Caco-2 (cell line): ENCODE measurements at regions of chr2 and their contacts with region 1.

Region 1: DNA sequence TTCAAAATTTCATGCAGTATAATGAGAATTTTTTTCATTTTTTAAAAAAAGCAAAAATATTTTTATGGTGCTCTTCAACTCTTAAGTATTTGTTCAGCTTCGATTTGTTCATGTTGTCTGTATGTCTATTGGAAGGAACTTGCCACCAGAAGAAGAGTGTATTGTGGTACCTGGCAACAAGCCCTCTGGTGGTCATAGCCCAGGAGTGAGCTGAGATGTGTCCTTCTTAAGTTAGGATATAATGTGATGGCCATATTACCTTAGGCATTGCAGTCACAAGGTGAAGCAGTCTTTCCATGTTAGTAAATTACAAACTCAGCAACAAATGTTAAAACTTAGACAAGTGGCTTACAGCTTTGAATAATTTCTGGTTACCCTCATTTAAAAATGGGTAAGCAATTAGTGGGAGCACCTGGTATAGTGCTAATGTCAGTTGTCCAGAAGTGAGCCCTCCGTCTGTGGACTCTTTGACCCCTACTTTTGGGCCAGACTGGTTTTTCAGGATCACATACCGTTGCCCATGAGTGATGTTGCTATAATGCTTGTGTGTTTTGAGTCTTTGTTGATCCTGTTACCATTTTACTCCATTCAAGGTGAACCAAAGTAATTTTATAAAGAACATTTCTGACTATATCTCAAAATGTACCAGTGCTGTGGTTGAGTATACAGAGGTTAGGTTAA is 57.4 kb downstream of the MYO1B start:
- DNase-seq: peak; percentile 56 to 59
- H3K4me3 ChIP-seq: no peak overlapping the region
- H3K4me3 Mint-ChIP-seq: no peak overlapping the region
- H3K27ac Mint-ChIP-seq: peak overlapping the region; percentile 18
- H3K4me1 ChIP-seq: peaks cover 26% of the 10 kb centered on the region
- H3K4me1 Mint-ChIP-seq: peaks cover 37% of the 10 kb centered on the region
- H3K27me3 ChIP-seq: no peaks in the 10 kb centered on the region
- H3K27me3 Mint-ChIP-seq: no peaks in the 10 kb centered on the region
- CTCF ChIP-seq: peak; percentile 58 to 65

Region 2: GRCh38 chr2:191218292-191218898 is 84.2 kb before region 1 on chr2:
- CTCF ChIA-PET with region 1: no interaction called
- POLR2A ChIA-PET with region 1: no interaction called
- intact Hi-C with region 1: loop called (anchors 2 kb)
- DNase-seq: peak; percentile 63 to 65
- H3K4me3 ChIP-seq: no peak overlapping the region
- H3K4me3 Mint-ChIP-seq: no peak overlapping the region
- H3K27ac Mint-ChIP-seq: no peak overlapping the region
- H3K4me1 ChIP-seq: peaks cover 27% of the 10 kb centered on the region
- H3K4me1 Mint-ChIP-seq: peaks cover 15% of the 10 kb centered on the region
- H3K27me3 ChIP-seq: no peaks in the 10 kb centered on the region
- H3K27me3 Mint-ChIP-seq: no peaks in the 10 kb centered on the region
- CTCF ChIP-seq: peak; percentile 55 to 61

Region 3: DNA sequence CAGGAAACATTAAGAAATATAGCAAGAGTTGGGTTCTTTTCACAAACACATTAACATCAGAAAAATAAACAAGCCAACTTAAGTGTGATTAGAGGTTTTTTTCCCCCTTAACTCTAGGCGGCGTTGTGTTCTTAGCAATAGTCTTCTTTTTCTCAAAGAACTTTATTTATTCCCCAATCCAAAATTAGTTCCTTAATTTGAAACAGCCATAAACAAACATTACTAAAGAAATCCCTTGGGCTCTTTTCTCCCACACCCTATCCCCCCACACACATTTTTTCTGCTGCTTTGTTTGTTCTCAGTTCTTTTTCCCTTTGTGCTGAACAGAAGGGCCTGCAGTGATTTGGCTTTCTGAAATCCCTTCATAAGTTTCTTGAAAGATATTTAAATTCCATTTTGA is 70.6 kb before region 1 on chr2:
- CTCF ChIA-PET with region 1: no interaction called
- POLR2A ChIA-PET with region 1: no interaction called
- intact Hi-C with region 1: no loop called
- DNase-seq: no peak
- H3K4me3 ChIP-seq: no peak overlapping the region
- H3K4me3 Mint-ChIP-seq: no peak overlapping the region
- H3K27ac Mint-ChIP-seq: no peak overlapping the region
- H3K4me1 ChIP-seq: no peaks in the 10 kb centered on the region
- H3K4me1 Mint-ChIP-seq: no peaks in the 10 kb centered on the region
- H3K27me3 ChIP-seq: no peaks in the 10 kb centered on the region
- H3K27me3 Mint-ChIP-seq: no peaks in the 10 kb centered on the region
- CTCF ChIP-seq: peak; percentile 28 to 39